ENCODE measurements at regions of chr16 and their contacts with region 1.

Region 1: GRCh38 chr16:71610936-71611871 is 14.8 kb upstream of the MARVELD3 start:
- DNase-seq: peak; percentile 85
- H3K4me3 Mint-ChIP-seq: no peak overlapping the region
- H3K27ac Mint-ChIP-seq: no peak overlapping the region
- H3K4me1 Mint-ChIP-seq: peaks cover 9% of the 10 kb centered on the region
- H3K27me3 Mint-ChIP-seq: peaks cover 19% of the 10 kb centered on the region

Region 2: DNA sequence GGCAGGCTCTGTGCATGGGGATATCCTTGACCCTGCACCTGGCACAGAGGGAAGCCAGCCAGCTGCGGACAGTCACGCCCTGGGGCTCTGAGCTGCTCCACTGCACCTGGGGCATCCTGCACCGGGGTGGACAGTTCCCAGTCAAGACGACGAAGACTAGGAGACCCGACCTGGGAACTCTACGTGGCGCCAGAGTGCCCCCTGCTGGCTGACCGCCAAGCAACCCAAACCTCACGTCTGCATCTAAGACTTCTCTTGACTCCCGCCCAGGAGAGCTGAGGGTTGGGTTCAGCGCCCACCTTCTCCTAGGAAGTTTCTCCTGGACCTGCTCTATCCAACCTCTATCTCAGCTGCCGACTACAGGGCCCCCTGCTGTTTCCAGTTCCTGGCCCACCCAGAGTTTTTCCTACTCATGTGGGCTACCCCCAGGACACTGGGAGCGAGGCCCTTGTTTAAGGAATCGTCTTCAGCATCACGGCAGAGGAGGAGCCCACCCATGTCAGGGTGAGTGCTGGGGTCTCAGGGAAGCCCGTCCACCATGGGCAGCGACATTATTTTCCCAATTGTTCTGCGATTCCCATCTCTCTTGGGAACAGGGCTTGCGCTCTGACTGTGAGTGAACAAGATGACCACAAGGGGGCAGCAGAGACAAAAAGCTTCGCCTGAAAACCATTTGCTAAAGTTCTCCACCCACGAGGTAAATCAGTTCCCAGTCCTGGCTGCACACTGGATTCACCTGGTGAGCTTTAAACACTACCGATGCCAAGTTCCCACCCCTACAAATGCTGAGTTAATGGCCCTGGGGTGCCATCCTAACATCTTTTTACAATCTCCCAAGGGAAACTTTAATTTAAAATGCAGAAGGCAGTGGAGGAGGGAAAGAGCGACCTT is 198.7 kb before region 1 on chr16:
- CTCF ChIA-PET with region 1: interaction called, 44 read pairs
- POLR2A ChIA-PET with region 1: no interaction called
- intact Hi-C with region 1: loop called (anchors 2 kb)
- DNase-seq: peak; percentile 71
- H3K4me3 Mint-ChIP-seq: no peak overlapping the region
- H3K27ac Mint-ChIP-seq: no peak overlapping the region
- H3K4me1 Mint-ChIP-seq: peaks cover 5% of the 10 kb centered on the region
- H3K27me3 Mint-ChIP-seq: peaks cover 34% of the 10 kb centered on the region

Region 3: DNA sequence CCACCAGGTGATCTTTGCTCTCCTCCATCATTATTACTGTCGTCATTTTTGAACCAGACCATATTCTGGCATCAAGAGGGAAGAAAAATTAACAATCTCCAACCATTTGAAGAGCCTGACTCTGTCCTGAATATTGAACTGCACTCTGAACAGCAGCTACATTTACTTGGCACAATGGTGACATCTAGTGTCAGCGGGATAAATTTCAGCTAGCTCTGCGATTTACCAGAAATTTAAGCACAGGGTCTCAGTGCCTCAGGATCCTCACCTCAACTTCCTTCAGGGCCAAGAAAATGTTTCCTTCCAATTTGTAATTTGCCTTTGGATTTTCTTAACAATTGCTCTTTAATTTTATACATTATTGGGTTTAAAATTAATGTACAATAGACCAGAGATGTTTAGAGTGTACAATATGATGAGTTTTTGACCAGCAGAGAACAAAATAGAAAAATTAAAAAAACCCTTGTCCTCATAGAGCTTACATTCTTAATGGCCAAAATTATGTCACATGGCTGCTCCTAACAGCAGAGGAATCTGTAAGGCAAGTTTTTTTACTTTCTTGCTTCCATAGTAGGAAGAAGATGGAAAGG is 111.3 kb before region 1 on chr16:
- CTCF ChIA-PET with region 1: interaction called, 37 read pairs
- POLR2A ChIA-PET with region 1: no interaction called
- intact Hi-C with region 1: no loop called
- DNase-seq: peak; percentile 47
- H3K4me3 Mint-ChIP-seq: no peak overlapping the region
- H3K27ac Mint-ChIP-seq: no peak overlapping the region
- H3K4me1 Mint-ChIP-seq: no peaks in the 10 kb centered on the region
- H3K27me3 Mint-ChIP-seq: peaks cover 2% of the 10 kb centered on the region

Region 4: GRCh38 chr16:71564155-71564967 is 46.8 kb before region 1 on chr16:
- CTCF ChIA-PET with region 1: interaction called, 97 read pairs
- POLR2A ChIA-PET with region 1: no interaction called
- intact Hi-C with region 1: loop called (anchors 1 kb)
- DNase-seq: no peak
- H3K4me3 Mint-ChIP-seq: peak overlapping the region; percentile 79
- H3K27ac Mint-ChIP-seq: peak overlapping the region; percentile 92
- H3K4me1 Mint-ChIP-seq: peaks cover 14% of the 10 kb centered on the region
- H3K27me3 Mint-ChIP-seq: no peaks in the 10 kb centered on the region

Region 5: GRCh38 chr16:71593048-71593999 is 17.9 kb before region 1 on chr16:
- CTCF ChIA-PET with region 1: interaction called, 12 read pairs
- POLR2A ChIA-PET with region 1: no interaction called
- intact Hi-C with region 1: no loop called
- DNase-seq: no peak
- H3K4me3 Mint-ChIP-seq: no peak overlapping the region
- H3K27ac Mint-ChIP-seq: no peak overlapping the region
- H3K4me1 Mint-ChIP-seq: no peaks in the 10 kb centered on the region
- H3K27me3 Mint-ChIP-seq: peaks cover 24% of the 10 kb centered on the region

Region 6: DNA sequence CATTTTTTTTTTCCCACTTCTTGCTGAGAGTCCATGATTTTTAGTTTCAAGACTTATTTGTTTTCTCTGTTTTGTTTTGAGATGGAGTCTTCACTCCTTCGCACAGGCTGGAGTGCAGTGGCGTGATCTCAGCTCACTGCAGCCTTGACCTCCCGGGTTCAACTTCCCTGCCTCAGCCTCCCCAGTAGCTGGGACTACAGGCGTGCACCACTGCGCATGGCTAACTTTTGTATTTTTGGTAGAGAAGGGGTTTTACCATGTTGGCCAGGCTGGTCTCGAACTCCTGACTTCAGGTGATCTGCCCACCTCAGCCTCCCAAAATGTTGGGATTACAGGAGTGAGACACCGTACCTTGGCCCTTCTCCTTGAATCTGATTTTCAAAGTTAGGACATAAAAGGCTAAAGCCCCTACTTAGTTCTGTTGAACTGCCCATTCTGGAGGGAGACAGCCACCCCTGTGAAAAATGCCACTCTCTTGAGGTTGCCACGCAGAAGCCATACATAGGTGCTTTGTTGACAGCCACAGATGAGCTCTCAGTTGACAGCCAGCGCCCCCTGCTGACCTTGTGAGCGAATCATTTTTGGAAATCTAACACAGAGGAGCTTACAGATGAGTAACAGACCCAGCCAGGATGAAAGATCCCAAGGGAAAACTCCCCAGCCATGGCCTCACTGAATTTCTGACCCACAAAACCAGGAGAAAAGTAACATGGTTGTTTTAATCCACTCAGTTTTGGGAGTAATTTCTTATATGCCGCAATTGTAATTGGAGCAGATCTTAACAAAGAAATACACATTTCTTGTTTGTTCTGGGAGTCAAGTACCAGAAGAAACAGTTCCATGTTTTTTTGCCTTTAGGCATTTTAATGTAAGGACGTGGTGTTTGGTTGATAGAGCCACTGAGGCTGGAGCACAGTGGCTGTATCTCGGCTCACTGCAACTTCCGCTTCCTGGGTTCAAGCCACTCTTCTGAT is 350.1 kb after region 1 on chr16:
- CTCF ChIA-PET with region 1: interaction called, 15 read pairs
- POLR2A ChIA-PET with region 1: no interaction called
- intact Hi-C with region 1: loop called (anchors 1 kb)
- DNase-seq: peak; percentile 90
- H3K4me3 Mint-ChIP-seq: no peak overlapping the region
- H3K27ac Mint-ChIP-seq: no peak overlapping the region
- H3K4me1 Mint-ChIP-seq: peaks cover 2% of the 10 kb centered on the region
- H3K27me3 Mint-ChIP-seq: no peaks in the 10 kb centered on the region